ENCODE measurements at regions of chr14 and their contacts with region 1.

Region 1: GRCh38 chr14:106094654-106095189 is 568.3 kb downstream of the TMEM121 start:
- DNase-seq: peak; percentile 89
- H3K4me3 Mint-ChIP-seq: no peak overlapping the region
- H3K27ac Mint-ChIP-seq: no peak overlapping the region
- H3K4me1 Mint-ChIP-seq: no peaks in the 10 kb centered on the region
- H3K27me3 Mint-ChIP-seq: peaks cover 5% of the 10 kb centered on the region

Region 2: GRCh38 chr14:106080924-106081323 is 13.8 kb before region 1 on chr14:
- CTCF ChIA-PET with region 1: interaction called, 11 read pairs
- POLR2A ChIA-PET with region 1: no interaction called
- intact Hi-C with region 1: no loop called
- DNase-seq: no peak
- H3K4me3 Mint-ChIP-seq: no peak overlapping the region
- H3K27ac Mint-ChIP-seq: no peak overlapping the region
- H3K4me1 Mint-ChIP-seq: no peaks in the 10 kb centered on the region
- H3K27me3 Mint-ChIP-seq: peaks cover 17% of the 10 kb centered on the region